Colonic mucosa (tissue), 4 donors: ENCODE measurements at regions of chr17 and their contacts with region 1.

Region 1: DNA sequence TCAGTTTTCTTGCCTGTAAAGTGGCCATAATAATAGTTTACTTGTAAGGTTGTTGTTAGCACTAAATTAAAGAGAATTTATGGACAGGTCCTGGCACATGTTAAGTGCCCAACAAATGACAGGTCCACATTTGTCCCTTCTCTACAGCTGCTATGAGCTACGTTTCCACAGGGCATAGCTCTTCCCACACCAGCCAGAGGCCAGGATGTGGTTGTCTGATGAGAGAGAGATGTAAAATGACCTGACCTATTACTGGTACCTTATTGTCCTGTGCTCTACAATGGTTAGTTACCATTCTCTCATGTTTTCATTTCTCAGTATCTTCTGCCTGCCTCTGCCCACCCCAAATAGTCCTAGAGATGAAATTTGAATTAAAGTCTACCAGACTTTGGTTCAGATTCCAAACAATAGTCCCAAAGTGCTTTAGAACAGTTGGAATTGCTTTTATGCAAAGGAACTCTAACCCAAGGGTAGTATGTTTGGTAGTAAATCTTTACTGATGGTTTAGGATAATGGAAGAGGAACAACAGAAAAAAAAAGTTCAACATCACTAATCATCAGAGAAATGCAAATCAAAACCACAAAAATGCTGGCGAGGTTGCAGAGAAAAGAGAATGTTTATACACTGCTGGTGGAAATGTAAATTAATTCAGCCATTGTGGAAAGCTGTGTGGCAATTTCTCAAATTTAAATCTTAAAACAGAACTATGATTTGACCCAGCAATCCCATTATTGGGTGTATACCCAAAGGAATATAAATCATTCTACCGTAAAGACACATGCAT is 57.1 kb upstream of the ANKFN1 start:
- DNase-seq: no peak
- H3K4me3 ChIP-seq: no peak overlapping the region
- H3K27ac ChIP-seq: no peak overlapping the region
- H3K4me1 ChIP-seq: no peaks in the 10 kb centered on the region
- H3K27me3 ChIP-seq: no peaks in the 10 kb centered on the region
- CTCF ChIP-seq: no peak

Region 2: DNA sequence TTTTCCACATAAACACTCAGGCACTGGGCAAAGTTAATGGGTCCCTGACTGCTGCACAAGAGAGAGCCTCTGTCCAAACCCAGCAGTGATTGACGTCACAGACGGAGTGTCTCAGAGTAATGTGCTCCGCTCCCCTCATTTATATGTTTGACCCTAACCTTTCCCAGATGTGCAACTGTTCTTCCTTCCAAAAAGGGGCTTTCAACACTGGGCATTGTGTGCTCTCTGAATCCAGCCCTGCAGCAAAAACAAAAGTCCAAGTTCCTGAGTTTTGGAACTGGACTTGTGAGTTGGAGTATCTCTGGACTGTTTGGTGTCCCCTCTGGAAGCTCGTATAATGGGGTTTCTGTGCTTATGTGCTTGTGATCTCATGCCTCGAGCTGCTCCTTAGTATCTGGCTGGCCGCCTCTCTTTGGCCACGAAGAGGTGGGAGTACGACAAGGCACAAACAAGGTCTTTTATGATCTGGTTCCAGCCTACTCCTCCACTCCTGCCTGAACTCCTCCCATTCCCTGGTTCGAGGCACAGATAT is 508.5 kb before region 1 on chr17:
- intact Hi-C with region 1: no loop called
- DNase-seq: no peak
- H3K4me3 ChIP-seq: no peak overlapping the region
- H3K27ac ChIP-seq: no peak overlapping the region
- H3K4me1 ChIP-seq: no peaks in the 10 kb centered on the region
- H3K27me3 ChIP-seq: no peaks in the 10 kb centered on the region
- CTCF ChIP-seq: no peak

Region 3: DNA sequence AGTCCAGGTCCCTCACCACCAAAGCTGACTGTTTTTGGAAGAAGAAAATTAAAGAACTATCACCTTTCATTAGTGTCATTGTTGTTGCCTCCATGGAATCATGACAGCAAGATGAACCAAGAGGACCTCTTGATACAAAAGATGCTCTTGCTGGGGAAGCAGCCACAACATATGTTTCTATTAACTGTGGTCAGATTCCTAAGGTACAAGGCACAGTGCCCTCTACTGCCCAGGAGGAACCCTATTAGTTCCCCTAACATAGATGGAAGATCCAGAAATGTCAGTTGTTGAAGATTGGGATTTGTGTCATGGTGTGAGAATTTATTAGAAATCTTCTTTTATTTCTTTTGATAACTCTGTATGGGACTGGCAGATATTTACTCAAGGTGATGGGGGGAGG is 131.2 kb before region 1 on chr17:
- intact Hi-C with region 1: no loop called
- DNase-seq: no peak
- H3K4me3 ChIP-seq: no peak overlapping the region
- H3K27ac ChIP-seq: no peak overlapping the region
- H3K4me1 ChIP-seq: no peaks in the 10 kb centered on the region
- H3K27me3 ChIP-seq: no peaks in the 10 kb centered on the region
- CTCF ChIP-seq: no peak

Region 4: DNA sequence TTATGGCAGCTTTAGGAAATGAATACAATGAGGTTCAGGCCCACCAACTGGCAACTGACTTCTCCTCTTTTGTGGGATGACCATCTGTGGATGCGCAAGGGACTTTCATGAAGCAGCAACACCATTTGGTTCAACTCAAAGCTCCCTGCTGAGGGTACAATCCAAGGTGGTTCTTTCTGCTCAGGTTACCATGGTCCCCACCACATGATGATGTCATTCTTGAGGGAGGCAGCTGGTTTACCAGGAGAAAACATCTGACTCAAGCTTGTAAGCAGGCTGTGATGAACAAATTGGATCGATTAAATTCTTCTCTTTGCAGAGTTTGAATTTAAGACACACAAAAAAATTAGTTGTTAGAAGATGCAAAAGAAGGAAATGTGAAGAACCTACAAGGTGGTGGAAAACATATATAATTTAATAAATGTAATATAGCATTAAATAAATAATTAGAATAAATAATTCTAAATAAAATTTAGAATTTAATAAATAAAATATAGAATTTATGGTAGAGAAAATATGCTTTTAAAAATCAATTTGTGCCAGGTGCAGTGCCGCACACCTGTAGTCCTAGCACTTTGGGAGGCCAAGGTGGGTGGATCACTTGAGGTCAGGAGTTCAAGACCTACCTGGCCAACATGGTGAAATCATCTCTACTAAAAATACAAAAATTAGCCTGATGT is 10.5 kb before region 1 on chr17:
- intact Hi-C with region 1: loop called (anchors 2 kb)
- DNase-seq: no peak
- H3K4me3 ChIP-seq: no peak overlapping the region
- H3K27ac ChIP-seq: no peak overlapping the region
- H3K4me1 ChIP-seq: no peaks in the 10 kb centered on the region
- H3K27me3 ChIP-seq: no peaks in the 10 kb centered on the region
- CTCF ChIP-seq: no peak